B cell (primary cell): ENCODE measurements at regions of chr10 and their contacts with region 1.

Region 1: DNA sequence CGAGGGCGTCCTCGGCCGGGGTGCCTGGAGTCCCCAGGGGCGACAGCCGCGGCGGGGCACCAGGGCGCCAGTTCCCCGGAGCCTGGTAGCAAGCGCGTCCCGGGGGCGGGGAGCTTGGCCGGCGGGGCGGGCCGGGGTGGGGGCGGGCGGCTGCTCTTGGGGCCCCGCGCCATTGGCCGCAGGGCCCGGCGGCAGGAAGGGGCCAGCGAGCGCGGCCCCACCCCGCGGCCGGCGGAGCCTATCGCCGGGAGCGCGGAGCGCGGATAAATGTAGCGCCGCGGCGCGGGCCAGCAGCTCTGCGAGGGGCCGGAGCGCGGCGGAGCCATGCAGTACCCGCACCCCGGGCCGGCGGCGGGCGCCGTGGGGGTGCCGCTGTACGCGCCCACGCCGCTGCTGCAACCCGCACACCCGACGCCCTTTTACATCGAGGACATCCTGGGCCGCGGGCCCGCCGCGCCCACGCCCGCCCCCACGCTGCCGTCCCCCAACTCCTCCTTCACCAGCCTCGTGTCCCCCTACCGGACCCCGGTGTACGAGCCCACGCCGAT is at the start of gene HHEX:
- DNase-seq: peak; percentile 88
- ATAC-seq: peak; percentile 76
- H3K4me3 ChIP-seq: peak within 1 kb of the TSS; percentile 82 to 95 (median 87)
- H3K4me3 Mint-ChIP-seq: peak within 1 kb of the TSS; percentile 96
- H3K27ac ChIP-seq: peak within 1 kb of the TSS; percentile 89 to 90
- H3K27ac Mint-ChIP-seq: peak within 1 kb of the TSS; percentile 98
- H3K4me1 ChIP-seq: peaks cover 28% of the 10 kb centered on the region in 2 donors
- H3K4me1 Mint-ChIP-seq: peaks cover 52% of the 10 kb centered on the region
- H3K27me3 ChIP-seq: no peaks in the 10 kb centered on the region
- H3K27me3 Mint-ChIP-seq: no peaks in the 10 kb centered on the region
- CTCF ChIP-seq: no peak
- total RNA-seq, gene HHEX: 149 and 155 TPM in 2 replicates

Region 2: DNA sequence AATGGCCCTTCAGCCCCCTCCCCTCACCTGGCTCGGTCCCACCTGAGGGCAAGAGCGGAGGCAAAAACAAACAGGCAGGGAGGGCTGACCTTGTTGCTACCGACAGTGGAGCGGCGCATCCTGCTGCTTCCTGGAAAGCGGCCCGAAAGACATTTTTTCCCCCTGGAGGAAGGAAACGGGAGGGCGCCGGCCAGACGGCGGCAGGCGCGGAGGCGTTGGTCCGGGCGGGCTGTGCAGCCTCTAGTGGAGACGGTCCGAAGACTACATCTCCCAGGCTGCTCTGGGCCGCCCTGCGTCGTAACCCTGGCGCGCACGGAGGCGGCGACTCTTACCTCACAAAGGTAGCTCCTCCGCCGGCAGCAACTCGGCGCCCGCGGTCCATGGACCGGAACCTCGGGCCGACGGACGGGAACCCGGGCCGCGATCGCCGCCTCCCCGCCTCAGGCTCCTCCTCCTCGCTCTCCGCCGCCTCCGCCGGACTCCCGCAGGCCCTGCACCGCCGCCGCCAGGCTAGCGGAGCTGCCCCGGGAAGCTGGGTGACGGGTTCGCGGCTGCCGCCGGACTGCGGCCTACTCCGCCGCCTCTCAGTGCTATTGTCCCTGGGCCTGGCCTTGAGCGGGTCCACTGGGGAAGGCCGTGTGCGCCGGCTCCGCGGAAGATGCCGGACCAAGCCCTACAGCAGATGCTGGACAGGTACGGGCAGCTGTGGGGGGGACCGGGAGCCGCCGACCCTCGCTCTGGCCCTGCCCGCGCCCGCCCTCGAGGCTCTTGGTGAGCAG is 398.7 kb before region 1 on chr10 and contains the starts of genes CPEB3 and MARCHF5:
- CTCF ChIA-PET with region 1: no interaction called
- POLR2A ChIA-PET with region 1: no interaction called
- intact Hi-C with region 1: loop called (anchors 5 kb)
- DNase-seq: peak; percentile 96
- ATAC-seq: peak; percentile 97
- H3K4me3 ChIP-seq: peak within 1 kb of the TSS; percentile 57 to 99 (median 85)
- H3K4me3 Mint-ChIP-seq: peak within 1 kb of the TSS; percentile 95
- H3K27ac ChIP-seq: peak within 1 kb of the TSS; percentile 62 to 88
- H3K27ac Mint-ChIP-seq: peak within 1 kb of the TSS; percentile 91
- H3K4me1 ChIP-seq: peaks cover 9 to 20% of the 10 kb centered on the region in 2 donors
- H3K4me1 Mint-ChIP-seq: peaks cover 29% of the 10 kb centered on the region
- H3K27me3 ChIP-seq: no peaks in the 10 kb centered on the region
- H3K27me3 Mint-ChIP-seq: no peaks in the 10 kb centered on the region
- CTCF ChIP-seq: peak; percentile 68
- total RNA-seq, gene CPEB3: 5.0 and 6.7 TPM in 2 replicates
- total RNA-seq, gene MARCHF5: 25.9 and 27.8 TPM in 2 replicates

Region 3: GRCh38 chr10:92508866-92509265 is 180.9 kb before region 1 on chr10:
- CTCF ChIA-PET with region 1: no interaction called
- POLR2A ChIA-PET with region 1: no interaction called
- intact Hi-C with region 1: no loop called
- DNase-seq: no peak
- ATAC-seq: no peak
- H3K4me3 ChIP-seq: no peak overlapping the region
- H3K4me3 Mint-ChIP-seq: no peak overlapping the region
- H3K27ac ChIP-seq: no peak overlapping the region
- H3K27ac Mint-ChIP-seq: no peak overlapping the region
- H3K4me1 ChIP-seq: no peaks in the 10 kb centered on the region
- H3K4me1 Mint-ChIP-seq: no peaks in the 10 kb centered on the region
- H3K27me3 ChIP-seq: no peaks in the 10 kb centered on the region
- H3K27me3 Mint-ChIP-seq: no peaks in the 10 kb centered on the region
- CTCF ChIP-seq: no peak

Region 4: GRCh38 chr10:92592761-92593618 is 96.7 kb before region 1 on chr10 and contains the start of gene KIF11:
- CTCF ChIA-PET with region 1: interaction called, 7 read pairs
- POLR2A ChIA-PET with region 1: interaction called, 38 read pairs
- intact Hi-C with region 1: loop called (anchors 1 kb)
- DNase-seq: peak; percentile 96
- ATAC-seq: peak; percentile 82
- H3K4me3 ChIP-seq: peak within 1 kb of the TSS; percentile 65 to 95 (median 84)
- H3K4me3 Mint-ChIP-seq: peak within 1 kb of the TSS; percentile 99
- H3K27ac ChIP-seq: peak within 1 kb of the TSS; percentile 82 to 92
- H3K27ac Mint-ChIP-seq: peak within 1 kb of the TSS; percentile 99
- H3K4me1 ChIP-seq: peaks cover 9 to 22% of the 10 kb centered on the region in 2 donors
- H3K4me1 Mint-ChIP-seq: peaks cover 41% of the 10 kb centered on the region
- H3K27me3 ChIP-seq: no peaks in the 10 kb centered on the region
- H3K27me3 Mint-ChIP-seq: no peaks in the 10 kb centered on the region
- CTCF ChIP-seq: no peak
- total RNA-seq, gene KIF11: 1.8 and 2.0 TPM in 2 replicates

Region 5: DNA sequence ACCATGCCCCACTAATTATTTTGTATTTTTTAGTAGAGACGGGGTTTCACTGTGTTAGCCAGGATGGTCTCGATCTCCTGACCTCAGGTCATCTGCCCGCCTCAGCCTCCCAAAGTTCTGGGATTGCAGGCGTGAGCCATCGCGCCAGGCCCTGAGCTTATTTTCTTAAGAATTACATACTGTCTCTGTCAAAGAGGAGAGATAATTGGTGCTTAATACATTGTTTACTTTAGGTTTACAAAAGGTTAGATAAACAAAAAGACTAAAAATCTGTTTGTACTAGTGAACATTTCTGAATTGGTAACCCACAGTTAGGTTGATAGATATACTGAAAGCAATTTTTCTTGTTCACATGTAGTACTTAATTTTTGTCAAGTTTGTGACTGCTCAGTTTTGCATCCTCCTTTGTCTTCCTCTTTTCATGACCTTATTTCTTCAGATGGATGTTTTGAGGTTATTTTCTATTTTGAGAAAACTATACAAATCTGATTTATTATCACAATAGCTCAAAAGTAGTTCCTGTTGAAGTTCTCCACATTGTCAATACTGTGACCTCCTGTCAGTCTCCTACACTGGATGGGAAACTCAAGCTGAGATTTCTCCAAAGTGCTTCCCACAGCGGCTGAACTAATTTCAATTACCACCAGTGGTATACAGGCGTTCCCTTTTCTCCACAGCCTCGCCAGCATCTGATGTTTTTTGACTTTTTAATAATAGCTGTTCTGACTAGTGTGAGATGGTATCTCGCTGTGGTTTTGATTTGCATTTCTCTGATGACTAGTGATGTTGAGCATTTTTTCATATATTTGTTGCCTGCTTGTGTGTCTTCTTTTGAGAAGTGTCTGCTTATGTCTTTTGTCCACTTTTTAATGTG is 22.5 kb after region 1 on chr10:
- CTCF ChIA-PET with region 1: interaction called, 16 read pairs
- POLR2A ChIA-PET with region 1: interaction called, 20 read pairs
- intact Hi-C with region 1: loop called (anchors 1 kb)
- DNase-seq: peak; percentile 79
- ATAC-seq: peak; percentile 73
- H3K4me3 ChIP-seq: peak overlapping the region in 3 of 5 experiments; percentile 12 to 37 (median 27)
- H3K4me3 Mint-ChIP-seq: peak overlapping the region; percentile 76
- H3K27ac ChIP-seq: peak overlapping the region; percentile 73 to 74
- H3K27ac Mint-ChIP-seq: peak overlapping the region; percentile 95
- H3K4me1 ChIP-seq: peaks cover 54 to 61% of the 10 kb centered on the region in 2 donors
- H3K4me1 Mint-ChIP-seq: peaks cover 60% of the 10 kb centered on the region
- H3K27me3 ChIP-seq: no peaks in the 10 kb centered on the region
- H3K27me3 Mint-ChIP-seq: no peaks in the 10 kb centered on the region
- CTCF ChIP-seq: no peak

Region 6: GRCh38 chr10:92757066-92757710 is 67.5 kb after region 1 on chr10:
- CTCF ChIA-PET with region 1: interaction called, 63 read pairs
- POLR2A ChIA-PET with region 1: interaction called, 77 read pairs
- intact Hi-C with region 1: loop called (anchors 1 kb)
- DNase-seq: peak; percentile 86
- ATAC-seq: peak; percentile 66
- H3K4me3 ChIP-seq: peak overlapping the region; percentile 16 to 36 (median 29)
- H3K4me3 Mint-ChIP-seq: peak overlapping the region; percentile 75
- H3K27ac ChIP-seq: peak overlapping the region; percentile 84 to 87
- H3K27ac Mint-ChIP-seq: peak overlapping the region; percentile 97
- H3K4me1 ChIP-seq: peaks cover 65 to 73% of the 10 kb centered on the region in 2 donors
- H3K4me1 Mint-ChIP-seq: peaks cover 75% of the 10 kb centered on the region
- H3K27me3 ChIP-seq: no peaks in the 10 kb centered on the region
- H3K27me3 Mint-ChIP-seq: no peaks in the 10 kb centered on the region
- CTCF ChIP-seq: peak; percentile 42

Region 7: DNA sequence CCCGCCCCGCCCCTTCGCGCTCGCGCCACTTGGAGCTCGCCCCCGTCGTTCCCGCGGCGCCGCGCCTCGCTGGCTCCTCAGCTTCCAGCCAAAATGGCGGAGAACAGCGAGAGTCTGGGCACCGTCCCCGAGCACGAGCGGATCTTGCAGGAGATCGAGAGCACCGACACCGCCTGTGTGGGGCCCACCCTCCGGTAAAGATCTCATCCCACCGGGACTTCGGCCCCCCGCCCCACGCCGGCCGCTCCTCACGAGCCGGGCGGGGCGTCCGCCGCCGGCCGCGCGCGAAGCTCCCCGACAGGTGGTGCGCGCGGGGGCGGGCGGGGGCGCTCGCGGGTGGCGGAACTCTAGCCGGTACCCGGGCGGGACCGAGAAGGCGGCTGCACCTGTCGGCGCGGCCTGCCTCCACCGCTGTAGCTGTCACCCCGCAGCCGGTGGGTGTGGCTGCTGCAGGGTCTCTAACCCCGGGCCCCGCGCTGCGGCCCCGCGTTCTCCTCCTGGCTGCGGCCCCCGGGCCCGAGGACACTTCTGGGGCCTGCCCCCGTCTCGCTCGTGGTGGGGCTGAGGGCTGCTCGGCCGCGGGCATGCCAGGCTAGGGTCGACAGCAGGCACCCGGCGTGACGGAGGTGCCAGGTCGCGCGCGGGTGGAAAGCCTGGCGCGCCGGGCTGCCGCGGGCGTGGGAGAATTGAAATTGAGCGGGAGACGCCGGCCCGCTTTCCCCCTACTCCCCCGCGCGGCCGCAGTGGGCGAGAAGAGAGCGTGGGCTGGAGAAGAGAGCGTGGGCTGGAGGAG is 158.9 kb after region 1 on chr10 and contains the start of gene EXOC6:
- CTCF ChIA-PET with region 1: interaction called, 73 read pairs
- POLR2A ChIA-PET with region 1: interaction called, 61 read pairs
- intact Hi-C with region 1: loop called (anchors 1 kb)
- DNase-seq: peak; percentile 96
- ATAC-seq: peak; percentile 88
- H3K4me3 ChIP-seq: peak within 1 kb of the TSS; percentile 61 to 83 (median 65)
- H3K4me3 Mint-ChIP-seq: peak within 1 kb of the TSS; percentile 91
- H3K27ac ChIP-seq: peak within 1 kb of the TSS; percentile 84 to 85
- H3K27ac Mint-ChIP-seq: peak within 1 kb of the TSS; percentile 93
- H3K4me1 ChIP-seq: peaks cover 23 to 26% of the 10 kb centered on the region in 2 donors
- H3K4me1 Mint-ChIP-seq: peaks cover 34% of the 10 kb centered on the region
- H3K27me3 ChIP-seq: no peaks in the 10 kb centered on the region
- H3K27me3 Mint-ChIP-seq: no peaks in the 10 kb centered on the region
- CTCF ChIP-seq: peak; percentile 54
- total RNA-seq, gene EXOC6: 22.6 and 25.6 TPM in 2 replicates